Stomach (tissue), 19 donors: ENCODE measurements at regions of chr6 and their contacts with region 1.

Region 1: GRCh38 chr6:119575721-119576120 is 226.2 kb upstream of the MAN1A1 start:
- DNase-seq: no peak
- H3K4me3 ChIP-seq: no peak overlapping the region
- H3K27ac ChIP-seq: no peak overlapping the region
- H3K4me1 ChIP-seq: no peaks in the 10 kb centered on the region
- H3K27me3 ChIP-seq: no peaks in the 10 kb centered on the region
- CTCF ChIP-seq: no peak
- EP300 ChIP-seq: no peak
- POLR2A ChIP-seq: no peak

Region 2: DNA sequence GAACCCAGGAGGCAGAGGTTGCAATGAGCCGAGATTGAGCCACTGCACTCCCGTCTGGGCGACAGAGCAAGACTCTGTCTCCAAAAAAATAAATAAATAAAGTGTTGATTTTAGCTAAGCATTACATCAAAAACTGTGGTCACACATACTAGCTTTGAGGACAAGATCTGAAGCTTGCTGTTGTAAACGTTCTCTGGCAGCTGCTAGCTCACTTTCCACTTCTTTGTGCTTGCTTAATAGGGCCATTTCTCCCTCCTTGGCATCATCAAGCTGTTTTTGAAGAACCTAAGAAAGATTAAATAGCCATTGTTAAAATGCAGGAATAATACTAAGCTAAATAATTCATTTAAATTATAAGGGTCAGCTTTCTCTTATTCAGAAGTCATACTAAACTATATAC is 552.9 kb before region 1 on chr6:
- intact Hi-C with region 1: no loop called
- DNase-seq: no peak
- H3K4me3 ChIP-seq: no peak overlapping the region
- H3K27ac ChIP-seq: no peak overlapping the region
- H3K4me1 ChIP-seq: no peaks in the 10 kb centered on the region
- H3K27me3 ChIP-seq: no peaks in the 10 kb centered on the region
- CTCF ChIP-seq: no peak
- EP300 ChIP-seq: no peak
- POLR2A ChIP-seq: no peak

Region 3: DNA sequence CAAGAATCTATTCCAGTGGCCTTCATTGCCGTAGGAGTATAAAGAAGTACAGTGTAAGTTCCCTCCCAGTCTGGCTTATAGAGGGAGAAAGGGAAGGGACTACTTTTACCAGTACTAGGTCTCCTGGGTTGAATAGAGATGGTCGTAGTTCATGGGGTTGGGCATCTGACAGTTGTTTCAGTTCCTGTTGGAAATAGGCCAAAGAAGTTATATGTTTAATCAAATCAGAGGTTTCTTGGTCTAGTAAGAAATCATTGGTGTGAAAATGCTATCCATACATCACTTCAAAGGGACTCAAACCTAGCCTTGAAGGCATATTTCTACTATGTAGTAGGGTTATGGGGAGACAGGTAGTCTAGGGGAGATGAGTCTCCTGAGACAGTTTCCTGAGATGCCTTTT is 180.5 kb before region 1 on chr6:
- intact Hi-C with region 1: loop called (anchors 10 kb)
- DNase-seq: no peak
- H3K4me3 ChIP-seq: no peak overlapping the region
- H3K27ac ChIP-seq: no peak overlapping the region
- H3K4me1 ChIP-seq: no peaks in the 10 kb centered on the region
- H3K27me3 ChIP-seq: no peaks in the 10 kb centered on the region
- CTCF ChIP-seq: no peak
- EP300 ChIP-seq: no peak
- POLR2A ChIP-seq: no peak

Region 4: DNA sequence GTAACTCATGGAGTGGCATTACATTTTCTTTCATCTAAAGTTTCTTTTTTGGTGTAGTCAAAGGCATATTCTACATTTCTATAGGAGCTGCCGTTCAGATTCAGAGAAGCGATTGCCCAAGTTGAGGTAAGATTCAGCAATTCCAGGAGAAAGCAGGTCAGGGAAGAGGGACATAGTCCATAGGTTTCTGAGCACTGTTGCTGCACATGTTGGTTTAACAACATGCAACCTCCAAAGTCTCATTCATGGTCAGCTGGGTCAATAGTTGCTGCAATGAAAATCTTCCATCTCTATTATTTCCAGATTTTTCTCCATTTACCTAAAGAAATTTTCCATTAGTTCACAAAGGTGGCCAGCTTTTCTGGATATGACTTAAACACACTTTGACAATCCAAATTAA is 456.1 kb after region 1 on chr6:
- intact Hi-C with region 1: no loop called
- DNase-seq: no peak
- H3K4me3 ChIP-seq: no peak overlapping the region
- H3K27ac ChIP-seq: no peak overlapping the region
- H3K4me1 ChIP-seq: no peaks in the 10 kb centered on the region
- H3K27me3 ChIP-seq: no peaks in the 10 kb centered on the region
- CTCF ChIP-seq: no peak
- EP300 ChIP-seq: no peak
- POLR2A ChIP-seq: no peak